Activated T-helper 2 cell treated with anti-CD3 and anti-CD28 coated beads, Interferon-gamma antibody, Interleukin-2, Interleukin-4, amounts not matched to agents 10 μg/mL and 5 μg/mL and 100 μg/mL, durations not matched to agents 14 hours and 24 hours and 36 hours (primary cell): ENCODE measurements at regions of chr2 and their contacts with region 1.

Region 1: GRCh38 chr2:9555297-9556141 is at the start of gene ADAM17:
- DNase-seq: peak; percentile 86
- H3K4me3 Mint-ChIP-seq: peak within 1 kb of the TSS; percentile 97
- H3K27ac Mint-ChIP-seq: peak within 1 kb of the TSS; percentile 97
- H3K4me1 Mint-ChIP-seq: peaks cover 40% of the 10 kb centered on the region
- H3K27me3 Mint-ChIP-seq: no peaks in the 10 kb centered on the region
- total RNA-seq, gene ADAM17: 23.3 and 25.0 TPM in 2 replicates

Region 2: DNA sequence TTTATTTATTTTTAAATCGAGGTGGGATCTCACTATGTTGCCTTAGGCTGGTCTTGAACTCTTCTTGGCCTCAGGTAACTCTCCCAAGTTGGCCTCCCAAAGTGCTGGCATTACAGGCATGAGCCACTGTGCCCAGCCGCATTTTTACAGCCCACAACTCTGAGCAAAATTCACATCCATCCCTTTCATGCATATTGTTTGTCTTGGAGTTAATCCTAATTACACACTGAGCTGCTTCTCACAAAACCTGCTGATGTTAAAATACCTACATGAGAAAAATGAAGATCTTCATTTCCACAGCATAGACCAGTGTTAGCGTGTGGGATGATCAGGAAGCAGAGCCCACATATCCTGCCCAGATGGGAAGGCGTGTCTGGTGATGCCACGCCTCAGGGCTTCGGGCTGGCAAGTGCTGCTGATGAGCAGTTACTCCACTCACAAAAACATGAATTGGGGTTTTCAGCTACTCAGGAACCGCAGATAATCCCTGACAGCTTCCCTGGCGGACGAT is 146.8 kb before region 1 on chr2:
- intact Hi-C with region 1: no loop called
- DNase-seq: no peak
- H3K4me3 Mint-ChIP-seq: no peak overlapping the region
- H3K27ac Mint-ChIP-seq: no peak overlapping the region
- H3K4me1 Mint-ChIP-seq: no peaks in the 10 kb centered on the region
- H3K27me3 Mint-ChIP-seq: no peaks in the 10 kb centered on the region

Region 3: DNA sequence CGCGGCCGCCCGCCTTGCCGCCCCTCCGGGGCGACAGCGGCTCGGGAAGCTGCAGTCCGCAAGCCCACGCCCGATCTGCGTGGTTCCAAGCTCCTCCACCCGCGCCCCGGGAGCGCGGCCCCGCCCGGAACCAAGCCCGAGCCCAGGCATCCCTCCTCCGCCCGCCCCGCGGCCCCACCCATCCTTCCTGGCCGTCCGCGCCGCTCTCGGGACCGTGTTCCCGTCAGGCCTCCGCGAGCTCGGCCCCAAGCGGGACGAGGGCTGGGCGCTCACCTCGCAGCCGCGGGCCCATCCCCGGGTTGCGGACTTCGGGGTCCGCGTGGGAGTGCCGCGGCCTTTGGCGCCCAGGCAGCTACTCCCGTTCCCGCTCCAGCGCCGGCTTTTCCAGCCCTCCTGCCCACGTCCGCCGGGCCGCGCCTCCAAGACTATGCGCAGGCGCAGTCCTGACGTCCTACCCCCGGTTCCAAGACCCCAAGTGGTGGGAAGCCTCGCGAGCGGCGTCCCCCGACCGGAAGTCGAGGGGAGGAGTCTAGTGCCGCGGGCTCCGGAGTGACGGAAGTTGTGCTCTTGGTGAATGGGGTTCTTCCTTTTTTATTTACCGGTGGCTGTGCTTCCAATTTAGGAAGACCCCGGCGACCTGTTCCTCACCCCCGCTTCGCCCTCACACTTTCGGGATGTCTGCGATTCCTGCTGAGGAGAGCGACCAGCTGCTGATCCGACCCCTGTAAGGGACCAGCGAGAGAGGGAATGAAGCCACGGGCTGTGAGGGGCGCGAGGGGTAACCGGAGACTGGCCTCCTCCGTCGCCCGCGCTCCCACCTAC is 132.2 kb before region 1 on chr2 and contains the starts of genes CPSF3 and ITGB1BP1:
- intact Hi-C with region 1: loop called (anchors 2 kb)
- DNase-seq: peak; percentile 97
- H3K4me3 Mint-ChIP-seq: peak within 1 kb of the TSS; percentile 91
- H3K27ac Mint-ChIP-seq: peak within 1 kb of the TSS; percentile 93
- H3K4me1 Mint-ChIP-seq: peaks cover 31% of the 10 kb centered on the region
- H3K27me3 Mint-ChIP-seq: no peaks in the 10 kb centered on the region
- total RNA-seq, gene CPSF3: 69.5 and 73.2 TPM in 2 replicates
- total RNA-seq, gene ITGB1BP1: 118 and 128 TPM in 2 replicates

Region 4: GRCh38 chr2:9573840-9574239 is 18.3 kb after region 1 on chr2:
- intact Hi-C with region 1: loop called (anchors 2 kb)
- DNase-seq: no peak
- H3K4me3 Mint-ChIP-seq: no peak overlapping the region
- H3K27ac Mint-ChIP-seq: peak overlapping the region; percentile 7
- H3K4me1 Mint-ChIP-seq: peaks cover 21% of the 10 kb centered on the region
- H3K27me3 Mint-ChIP-seq: no peaks in the 10 kb centered on the region

Region 5: DNA sequence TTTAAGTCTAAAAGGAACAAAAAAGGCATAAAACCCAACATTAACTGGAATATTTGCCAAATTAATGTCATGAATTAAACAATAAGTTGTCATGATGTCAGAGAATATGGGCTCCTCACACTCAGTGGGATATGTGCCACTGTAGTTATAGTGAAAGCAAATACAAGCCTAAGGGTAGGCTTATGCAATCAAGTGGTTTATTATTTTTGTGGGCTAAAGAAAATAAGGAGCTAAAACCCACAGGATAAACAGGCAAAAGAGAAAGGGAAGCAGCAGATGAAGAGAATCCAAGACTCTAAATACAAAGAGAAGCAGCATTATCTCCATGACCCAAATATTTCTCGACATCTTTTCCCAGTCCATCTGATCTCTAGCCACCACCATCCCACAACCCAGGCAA is 57.8 kb after region 1 on chr2:
- intact Hi-C with region 1: loop called (anchors 1 kb)
- DNase-seq: no peak
- H3K4me3 Mint-ChIP-seq: no peak overlapping the region
- H3K27ac Mint-ChIP-seq: no peak overlapping the region
- H3K4me1 Mint-ChIP-seq: peaks cover 78% of the 10 kb centered on the region
- H3K27me3 Mint-ChIP-seq: no peaks in the 10 kb centered on the region

Region 6: DNA sequence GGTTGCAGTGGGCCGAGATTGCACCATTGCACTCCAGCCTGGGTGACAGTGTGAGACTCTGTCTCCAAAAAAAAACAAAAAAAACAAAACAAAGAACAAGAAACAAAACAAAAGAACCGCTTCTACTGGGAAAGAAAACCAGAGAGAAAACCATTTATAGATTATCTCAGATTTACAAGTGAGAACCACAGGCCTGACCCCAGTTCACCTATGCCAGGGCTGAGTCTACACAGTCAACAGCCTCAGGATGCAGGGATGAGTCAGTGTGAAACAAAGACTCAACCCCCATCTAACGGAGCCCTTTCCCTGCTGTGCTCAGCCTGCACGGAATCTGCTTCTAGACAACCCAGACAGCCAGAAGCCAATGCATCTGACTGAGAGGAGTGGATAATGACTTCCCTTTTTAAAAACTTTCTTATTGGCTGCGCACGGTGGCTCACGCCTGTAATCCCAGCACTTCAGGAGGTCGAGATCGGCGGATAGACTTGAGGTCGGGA is 100.8 kb after region 1 on chr2:
- intact Hi-C with region 1: loop called (anchors 1 kb)
- DNase-seq: peak; percentile 74
- H3K4me3 Mint-ChIP-seq: peak overlapping the region; percentile 4
- H3K27ac Mint-ChIP-seq: peak overlapping the region; percentile 91
- H3K4me1 Mint-ChIP-seq: peaks cover 49% of the 10 kb centered on the region
- H3K27me3 Mint-ChIP-seq: no peaks in the 10 kb centered on the region

Region 7: GRCh38 chr2:9753276-9753600 is 197.7 kb after region 1 on chr2:
- intact Hi-C with region 1: loop called (anchors 2 kb)
- DNase-seq: peak; percentile 56
- H3K4me3 Mint-ChIP-seq: peak overlapping the region; percentile 77
- H3K27ac Mint-ChIP-seq: peak overlapping the region; percentile 92
- H3K4me1 Mint-ChIP-seq: peaks cover 53% of the 10 kb centered on the region
- H3K27me3 Mint-ChIP-seq: peaks cover 21% of the 10 kb centered on the region

Region 8: DNA sequence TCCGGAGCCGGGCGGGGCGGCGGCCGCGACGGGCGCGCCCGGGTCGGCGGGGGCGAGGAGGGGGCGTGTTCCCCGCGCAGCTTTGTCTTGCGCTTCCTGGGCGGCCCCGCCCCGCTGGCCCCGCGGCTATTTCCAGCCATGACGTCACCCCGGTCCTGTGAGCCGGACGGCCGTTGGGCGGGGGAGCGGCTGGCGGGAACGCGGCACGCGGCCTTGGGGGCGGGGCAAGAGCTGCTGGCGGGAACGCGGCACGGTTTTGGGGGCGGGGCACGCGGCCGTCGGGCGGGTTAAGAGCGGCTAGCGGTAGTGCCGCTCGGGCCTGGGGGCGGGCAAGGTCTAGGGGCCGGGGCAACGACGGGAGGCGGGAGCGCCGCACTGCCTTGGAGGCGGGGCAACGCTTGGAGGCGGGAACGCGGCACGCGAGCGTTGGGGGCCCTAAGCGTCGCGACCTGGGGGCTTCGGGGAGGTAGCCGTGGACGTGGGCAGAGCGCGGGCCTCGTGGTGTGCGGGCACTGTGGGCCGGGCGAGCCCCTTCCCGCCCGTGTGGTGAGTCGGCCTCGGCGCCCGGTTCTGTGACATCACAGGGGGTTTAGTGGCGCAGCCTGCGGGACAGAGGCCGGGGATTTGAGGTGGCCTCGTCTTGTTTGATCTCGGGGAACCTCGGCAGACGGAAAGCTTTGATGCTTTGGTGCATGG is 488.5 kb after region 1 on chr2:
- intact Hi-C with region 1: loop called (anchors 10 kb)
- DNase-seq: peak; percentile 88
- H3K4me3 Mint-ChIP-seq: peak overlapping the region; percentile 71
- H3K27ac Mint-ChIP-seq: peak overlapping the region; percentile 60
- H3K4me1 Mint-ChIP-seq: peaks cover 16% of the 10 kb centered on the region
- H3K27me3 Mint-ChIP-seq: peaks cover 16% of the 10 kb centered on the region